ENCODE measurements at regions of chr11 and their contacts with region 1.

Region 1: DNA sequence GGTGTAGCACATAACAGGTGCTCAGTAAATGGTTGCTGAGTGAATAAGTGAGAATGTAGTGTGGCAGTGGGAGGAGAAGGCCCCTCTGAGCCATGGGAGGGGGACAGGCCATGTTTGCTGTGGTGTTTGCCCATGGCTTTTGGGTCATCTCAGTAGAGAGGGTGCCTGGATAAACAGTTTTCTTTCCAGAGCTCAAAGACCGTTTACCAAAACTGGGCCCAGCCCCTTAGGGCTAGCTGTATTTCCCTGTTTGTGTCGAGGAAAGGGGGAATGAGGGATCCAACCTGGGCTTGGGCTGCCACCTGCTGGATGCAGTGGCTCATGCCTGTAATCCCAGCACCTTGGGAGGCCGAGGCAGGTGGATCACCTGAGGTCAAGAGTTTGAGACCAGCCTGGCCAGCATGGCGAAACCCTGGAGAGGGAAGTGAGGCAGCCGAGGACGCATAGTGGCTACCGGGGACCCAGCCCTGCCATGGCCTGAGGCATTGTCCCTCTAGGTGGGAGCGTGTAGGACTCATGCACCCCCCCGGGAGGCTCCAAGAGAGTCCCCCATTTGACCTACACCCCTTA is 8.7 kb upstream of the LTO1 start:
- DNase-seq: no peak

Region 2: DNA sequence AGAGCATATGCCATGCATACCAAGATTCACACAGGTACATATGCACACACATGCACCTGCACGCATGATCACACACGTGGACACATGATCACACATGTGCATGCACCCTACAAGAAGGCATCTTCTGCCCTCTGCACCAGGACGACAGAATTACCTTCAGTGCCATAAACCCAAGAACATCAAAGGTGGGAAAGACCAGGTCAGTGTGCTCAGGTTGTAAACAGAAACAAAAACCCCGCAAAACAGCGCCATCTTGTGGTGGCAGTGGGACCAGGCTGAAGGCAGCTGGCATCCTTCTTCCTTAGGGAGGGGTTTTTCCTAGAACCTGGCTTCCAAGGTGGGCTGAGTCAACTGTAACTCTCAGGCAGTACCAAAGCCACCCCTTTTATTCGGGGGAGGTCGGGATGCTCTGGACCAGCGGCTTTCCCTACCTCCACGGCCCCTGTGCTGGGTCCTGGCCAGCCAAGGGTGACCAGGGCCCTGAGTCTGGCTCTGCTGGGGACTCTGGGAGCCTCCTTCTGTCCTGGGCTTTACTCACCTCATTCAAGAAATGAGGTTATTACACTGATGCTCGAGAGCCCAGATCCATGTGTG is 204.7 kb after region 1 on chr11:
- intact Hi-C with region 1: loop called (anchors 5 kb)
- DNase-seq: peak in 41 of 42 donors; percentile 18 to 89 (median 67)

Region 3: DNA sequence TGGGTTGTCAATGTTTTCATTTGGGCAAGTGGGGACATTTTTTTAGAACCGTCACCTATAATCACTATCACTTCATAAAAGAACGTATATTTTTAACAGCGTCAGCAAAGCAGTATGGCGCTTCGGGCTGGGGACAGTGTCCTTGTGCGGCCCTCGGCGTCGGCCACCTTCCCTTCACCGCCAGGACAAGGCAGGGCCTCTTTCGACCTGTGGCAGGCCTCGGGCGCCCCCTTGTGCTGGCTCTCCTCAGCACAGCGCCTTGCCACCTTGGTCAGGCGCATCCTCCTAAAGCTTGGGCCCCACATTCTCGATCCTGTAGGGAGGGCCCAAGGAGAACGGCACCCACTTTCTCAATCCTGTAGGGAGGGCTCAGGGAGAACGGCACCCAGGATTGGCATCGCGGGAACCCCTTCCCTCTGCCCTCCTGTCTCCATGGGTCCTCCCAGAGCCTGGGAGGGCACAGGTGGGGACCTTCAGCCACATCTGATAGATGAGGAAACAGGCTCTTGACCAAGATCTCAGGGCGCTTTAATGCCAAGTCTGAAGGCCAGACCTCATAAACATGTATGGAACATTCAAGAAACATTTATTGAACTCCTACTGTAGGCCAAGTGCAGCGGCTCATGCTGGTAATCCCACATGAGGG is 507.8 kb after region 1 on chr11:
- intact Hi-C with region 1: loop called (anchors 5 kb)
- DNase-seq: peak; percentile 12 to 79 (median 58)